ENCODE measurements at regions of chr4 and their contacts with region 1.

Region 1: DNA sequence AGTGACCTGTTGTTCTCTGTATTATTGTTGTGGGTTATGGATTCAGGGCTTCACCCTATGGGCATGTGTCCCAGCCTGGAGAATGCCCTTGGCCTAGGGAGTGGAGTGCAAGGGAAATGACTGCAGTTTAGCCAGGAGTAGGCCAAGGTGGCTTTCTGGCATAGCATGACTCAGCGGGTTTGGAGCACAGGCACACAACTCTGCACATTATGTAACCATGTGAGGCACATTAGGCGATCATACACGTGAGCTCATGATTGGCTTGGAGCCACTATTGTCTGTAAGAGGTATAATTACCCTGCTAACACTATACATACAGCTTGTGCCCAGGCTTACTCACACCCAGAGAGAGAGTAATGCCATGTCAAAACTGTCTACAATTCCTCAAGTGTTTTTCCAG is 35.1 kb upstream of the TACR3 start:
- DNase-seq: no peak
- ATAC-seq: no peak
- H3K4me3 ChIP-seq: no peak overlapping the region
- H3K27ac ChIP-seq: no peak overlapping the region
- H3K4me1 ChIP-seq: no peaks in the 10 kb centered on the region
- H3K27me3 ChIP-seq: no peaks in the 10 kb centered on the region
- CTCF ChIP-seq: no peak
- POLR2A ChIP-seq: no peak
- RAD21 ChIP-seq: no peak

Region 2: DNA sequence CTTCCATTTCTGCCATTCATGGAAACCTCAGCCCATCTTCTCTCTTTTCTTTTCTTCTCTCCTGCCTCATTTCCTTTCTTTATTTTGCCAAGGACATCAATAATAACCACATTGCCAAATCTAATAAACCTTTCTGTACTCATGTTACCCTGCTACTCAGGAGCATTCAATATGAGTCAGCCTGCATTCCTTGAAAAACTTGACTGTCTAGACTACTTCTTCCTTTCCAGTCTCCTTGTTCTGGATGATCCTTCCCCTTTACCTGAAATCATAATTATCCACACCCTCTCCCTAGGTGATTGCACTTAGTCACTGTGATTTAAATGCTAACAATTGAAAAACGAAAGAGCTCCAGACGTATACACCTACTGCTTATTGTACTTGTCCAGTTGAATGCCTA is 303.5 kb before region 1 on chr4:
- CTCF ChIA-PET with region 1: no interaction called
- POLR2A ChIA-PET with region 1: no interaction called
- dilution Hi-C with region 1: no loop called
- in situ Hi-C with region 1: no loop called
- intact Hi-C with region 1: loop called (anchors 10 kb)
- DNase-seq: no peak
- ATAC-seq: no peak
- H3K4me3 ChIP-seq: no peak overlapping the region
- H3K27ac ChIP-seq: no peak overlapping the region
- H3K4me1 ChIP-seq: no peaks in the 10 kb centered on the region
- H3K27me3 ChIP-seq: no peaks in the 10 kb centered on the region
- CTCF ChIP-seq: no peak
- POLR2A ChIP-seq: no peak
- RAD21 ChIP-seq: no peak

Region 3: DNA sequence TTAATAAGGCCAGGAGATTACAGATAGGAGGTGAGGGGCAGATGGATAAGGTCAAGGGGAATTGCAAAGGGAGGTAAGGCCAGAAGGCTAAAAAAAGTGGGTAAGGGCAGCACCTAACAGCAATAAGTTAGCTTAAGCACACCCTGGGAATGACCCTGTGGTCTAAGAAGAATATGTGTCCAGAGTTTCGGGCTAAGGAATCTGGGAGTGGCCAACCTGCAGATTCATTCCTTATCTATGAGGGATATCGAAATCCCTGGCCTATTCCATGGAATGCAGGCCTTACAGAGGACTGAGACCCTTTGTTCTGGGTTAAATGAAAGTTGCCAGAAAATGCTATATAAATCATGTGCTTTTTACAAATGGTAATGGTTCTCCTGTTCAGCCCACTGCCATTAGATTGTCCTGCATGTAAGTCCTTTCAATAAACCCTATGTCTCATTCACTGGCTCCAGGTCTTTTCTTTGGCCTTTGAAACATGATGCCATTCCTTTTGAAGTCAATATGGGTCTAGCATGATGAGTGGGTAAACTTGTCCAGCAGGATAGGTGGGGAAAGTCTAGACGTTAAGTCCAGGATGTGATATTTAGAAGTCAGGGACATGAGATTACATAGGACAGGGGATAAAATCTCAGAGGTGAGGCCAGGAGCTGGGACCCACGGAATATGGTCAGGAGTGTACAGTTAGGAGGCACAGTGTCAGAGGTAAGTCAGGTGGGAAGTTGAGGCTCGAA is 261.2 kb before region 1 on chr4:
- CTCF ChIA-PET with region 1: no interaction called
- POLR2A ChIA-PET with region 1: no interaction called
- dilution Hi-C with region 1: no loop called
- in situ Hi-C with region 1: no loop called
- intact Hi-C with region 1: no loop called
- DNase-seq: no peak
- ATAC-seq: no peak
- H3K4me3 ChIP-seq: no peak overlapping the region
- H3K27ac ChIP-seq: no peak overlapping the region
- H3K4me1 ChIP-seq: no peaks in the 10 kb centered on the region
- H3K27me3 ChIP-seq: no peaks in the 10 kb centered on the region
- CTCF ChIP-seq: no peak
- POLR2A ChIP-seq: no peak
- RAD21 ChIP-seq: no peak